Left cardiac atrium (tissue), 4 donors: ENCODE measurements at regions of chr2 and their contacts with region 1.

Region 1: DNA sequence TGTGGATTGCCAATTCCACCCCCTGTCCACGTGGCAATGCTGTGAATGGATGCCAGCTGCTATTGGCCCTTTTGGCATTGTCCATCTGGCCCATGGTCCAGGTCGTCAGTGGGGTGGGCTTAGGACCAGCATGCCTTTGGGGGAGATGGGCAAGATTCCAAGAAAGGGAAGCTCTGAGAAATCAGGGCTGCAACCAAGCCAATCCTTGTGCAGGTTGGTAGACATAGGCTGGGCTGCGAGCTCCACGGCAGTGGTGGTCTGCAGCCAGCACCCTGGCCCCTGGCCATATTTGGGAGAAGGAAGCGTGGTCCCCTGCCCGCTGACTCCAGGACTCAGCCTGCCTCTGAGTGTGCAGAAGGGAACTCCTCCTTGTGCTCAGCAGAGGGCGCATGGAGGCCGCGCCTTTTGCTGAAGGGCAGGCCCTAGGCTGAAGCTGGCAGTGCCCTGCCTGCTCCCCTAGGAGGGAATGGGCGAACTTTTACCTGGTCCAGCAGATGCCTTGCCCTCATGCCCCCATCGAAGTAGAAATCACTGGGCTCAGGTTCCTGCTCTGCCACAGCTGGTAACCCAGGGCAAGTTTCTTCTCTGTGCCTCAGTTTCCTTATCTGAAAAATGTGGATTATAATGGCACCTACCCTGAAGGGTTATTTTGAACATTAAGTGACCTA is 5.4 kb downstream of the SPR start:
- DNase-seq: peak; percentile 73
- ATAC-seq: peak; percentile 80 to 81

Region 2: DNA sequence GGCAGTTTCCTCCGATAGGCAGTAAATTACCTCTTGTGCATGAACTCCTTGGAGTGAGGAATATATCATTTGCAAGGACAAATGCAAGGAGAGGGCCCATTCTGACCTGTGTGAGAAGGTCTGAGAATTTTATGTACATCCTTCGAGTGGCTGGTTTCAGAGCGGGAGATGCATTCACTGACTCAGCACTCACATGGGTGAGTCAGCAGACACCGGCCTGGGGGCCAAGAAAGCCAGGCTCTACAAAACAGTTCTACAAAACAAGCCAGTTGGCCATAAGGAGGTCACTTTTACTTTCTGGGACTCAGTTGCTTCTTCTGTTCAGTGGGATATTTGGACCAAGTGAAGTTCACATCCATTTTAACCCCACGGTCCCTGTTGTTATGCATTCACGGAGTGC is 780.2 kb before region 1 on chr2:
- intact Hi-C with region 1: no loop called
- DNase-seq: no peak
- ATAC-seq: no peak

Region 3: DNA sequence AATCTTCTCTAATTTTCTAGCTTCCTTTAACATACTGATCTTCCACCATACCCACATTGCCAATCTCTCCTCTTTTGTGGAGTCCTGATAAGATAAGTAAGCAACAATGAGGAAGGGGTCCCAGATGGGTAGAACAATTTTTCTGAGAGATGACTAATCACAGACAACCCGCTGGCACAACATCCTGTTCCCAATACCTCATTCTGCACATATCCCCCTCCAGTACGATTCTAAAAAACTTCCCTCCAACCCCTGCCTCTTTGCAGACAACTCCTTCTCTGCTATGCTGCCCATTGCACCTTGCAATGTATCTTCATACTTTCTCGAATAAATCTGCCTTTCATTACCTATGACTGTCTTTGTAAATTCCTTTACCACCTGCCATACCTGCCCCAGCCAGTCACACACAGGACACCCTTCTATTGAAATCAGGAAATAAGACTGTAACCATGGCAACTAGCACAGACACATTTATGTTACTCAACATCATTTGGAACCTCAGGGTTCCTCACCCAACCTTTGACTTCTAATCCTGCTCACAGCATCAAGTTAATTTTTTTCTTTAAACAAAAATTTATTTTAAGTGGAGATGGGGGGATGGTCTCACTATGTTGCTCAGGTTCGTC is 59.4 kb before region 1 on chr2:
- intact Hi-C with region 1: no loop called
- DNase-seq: no peak
- ATAC-seq: no peak

Region 4: DNA sequence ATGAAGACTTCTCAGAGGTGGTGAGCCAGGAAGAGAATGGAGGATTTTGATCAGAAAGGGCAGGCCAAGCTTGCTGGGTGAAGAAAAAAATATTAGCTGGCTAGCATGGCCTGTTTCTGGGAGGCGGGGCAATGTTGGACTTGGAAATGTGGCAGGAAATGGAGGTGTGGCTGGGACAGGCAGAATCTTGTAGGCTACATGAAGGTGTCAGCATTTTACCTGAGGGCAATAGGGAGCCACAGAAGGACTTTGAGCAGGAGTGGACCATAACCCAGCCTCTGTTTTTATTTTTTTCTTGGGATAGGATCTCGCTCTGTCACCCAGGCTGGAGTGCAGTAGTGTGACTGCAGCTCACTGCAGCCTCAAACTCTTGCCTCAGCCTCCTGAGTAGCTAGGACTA is 56.4 kb after region 1 on chr2:
- intact Hi-C with region 1: no loop called
- DNase-seq: no peak
- ATAC-seq: no peak

Region 5: GRCh38 chr2:72963423-72964145 is 70.9 kb after region 1 on chr2:
- intact Hi-C with region 1: loop called in 1 of 2 experiments (anchors 10 kb)
- DNase-seq: no peak
- ATAC-seq: no peak

Region 6: GRCh38 chr2:73063909-73064875 is 171.6 kb after region 1 on chr2:
- intact Hi-C with region 1: loop called in 1 of 2 experiments (anchors 10 kb)
- DNase-seq: no peak
- ATAC-seq: peak in 1 of 2 donors; percentile 80

Region 7: GRCh38 chr2:73156539-73157124 is 264.0 kb after region 1 on chr2:
- intact Hi-C with region 1: loop called in 1 of 2 experiments (anchors 5 kb)
- DNase-seq: peak; percentile 79
- ATAC-seq: peak; percentile 85 to 93

Region 8: DNA sequence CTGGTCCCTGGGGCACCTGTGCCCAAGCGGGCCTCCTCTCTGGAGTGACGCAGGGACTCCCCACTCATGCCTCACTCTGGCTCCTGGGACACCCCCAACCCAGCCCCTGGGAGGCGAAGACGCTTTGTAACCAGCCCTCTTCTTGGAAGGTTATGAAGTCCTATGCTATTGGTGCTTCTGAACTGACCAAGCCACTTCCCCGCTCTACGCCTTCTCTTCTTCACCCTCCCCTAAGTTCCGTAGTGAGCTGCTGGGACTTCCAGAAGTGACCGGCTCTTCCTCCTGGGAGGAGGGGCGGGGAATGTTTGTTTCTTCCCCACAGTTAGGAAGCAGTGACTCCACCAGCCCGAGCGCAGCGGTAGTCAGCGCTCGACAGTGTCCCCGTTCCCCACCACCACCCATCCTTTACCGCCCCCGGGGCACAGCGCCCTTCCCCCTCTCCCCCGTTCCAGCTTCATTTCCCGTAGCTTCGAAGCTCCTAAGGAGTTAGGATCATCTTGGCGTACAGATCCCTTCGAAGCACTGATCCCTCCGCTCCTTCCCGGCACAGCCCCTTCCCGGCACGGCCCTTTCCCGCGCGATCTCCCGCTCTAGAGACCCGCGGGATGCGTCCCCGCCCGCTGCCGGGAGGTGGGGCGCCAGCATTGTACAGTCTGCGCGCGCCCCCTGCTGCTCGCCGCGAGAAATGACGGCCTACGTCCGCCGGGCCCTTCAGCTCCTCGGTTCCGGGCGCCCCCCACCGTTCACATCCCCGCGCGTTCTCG is 284.4 kb after region 1 on chr2:
- intact Hi-C with region 1: loop called in 1 of 2 experiments (anchors 5 kb)
- DNase-seq: peak; percentile 94
- ATAC-seq: peak; percentile 92 to 93